ENCODE measurements at regions of chr1 and their contacts with region 1.

Region 1: DNA sequence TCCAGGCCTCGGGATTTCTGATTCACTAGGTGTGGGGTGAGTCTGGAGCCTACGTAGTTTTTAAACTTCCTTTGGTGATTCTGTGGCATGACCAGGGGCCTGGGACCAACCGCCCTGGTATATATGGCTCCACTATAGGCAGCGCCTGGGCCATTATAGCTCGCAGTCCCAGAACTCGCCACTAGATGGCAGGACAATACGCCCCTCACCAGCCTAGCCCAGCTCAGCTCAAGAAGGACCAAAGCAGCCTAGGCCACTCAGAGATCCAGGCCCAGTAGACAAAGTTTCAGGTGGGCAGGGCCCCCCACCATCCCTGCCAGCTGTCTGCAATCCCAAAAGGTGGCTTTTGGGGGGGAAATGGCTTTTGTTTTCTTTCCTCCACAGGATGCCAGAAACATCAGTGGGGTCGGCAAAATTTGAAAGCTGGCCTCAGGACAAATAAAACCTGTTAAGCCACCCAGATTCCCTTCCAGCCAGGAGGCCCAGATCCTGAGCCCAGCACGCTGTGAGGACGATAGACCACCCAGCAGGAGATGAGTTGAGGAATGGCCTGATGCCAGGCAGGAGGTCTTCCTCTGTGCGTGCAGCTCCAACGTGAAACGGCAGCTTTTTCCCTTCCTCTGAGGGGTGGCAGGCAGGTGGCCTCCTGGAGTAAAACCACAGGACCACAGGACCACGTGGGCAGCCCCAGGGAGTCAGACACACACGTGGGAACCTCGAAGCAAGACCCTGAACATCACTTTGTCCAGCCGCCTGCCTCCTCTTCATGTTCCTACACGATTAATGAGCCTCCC is 24.8 kb upstream of the TMEM51 start:
- DNase-seq: peak; percentile 60
- ATAC-seq: peak; percentile 99
- H3K4me3 ChIP-seq: no peak overlapping the region
- H3K27ac ChIP-seq: no peak overlapping the region
- H3K4me1 ChIP-seq: no peaks in the 10 kb centered on the region
- H3K27me3 ChIP-seq: no peaks in the 10 kb centered on the region
- CTCF ChIP-seq: peak; percentile 94

Region 2: DNA sequence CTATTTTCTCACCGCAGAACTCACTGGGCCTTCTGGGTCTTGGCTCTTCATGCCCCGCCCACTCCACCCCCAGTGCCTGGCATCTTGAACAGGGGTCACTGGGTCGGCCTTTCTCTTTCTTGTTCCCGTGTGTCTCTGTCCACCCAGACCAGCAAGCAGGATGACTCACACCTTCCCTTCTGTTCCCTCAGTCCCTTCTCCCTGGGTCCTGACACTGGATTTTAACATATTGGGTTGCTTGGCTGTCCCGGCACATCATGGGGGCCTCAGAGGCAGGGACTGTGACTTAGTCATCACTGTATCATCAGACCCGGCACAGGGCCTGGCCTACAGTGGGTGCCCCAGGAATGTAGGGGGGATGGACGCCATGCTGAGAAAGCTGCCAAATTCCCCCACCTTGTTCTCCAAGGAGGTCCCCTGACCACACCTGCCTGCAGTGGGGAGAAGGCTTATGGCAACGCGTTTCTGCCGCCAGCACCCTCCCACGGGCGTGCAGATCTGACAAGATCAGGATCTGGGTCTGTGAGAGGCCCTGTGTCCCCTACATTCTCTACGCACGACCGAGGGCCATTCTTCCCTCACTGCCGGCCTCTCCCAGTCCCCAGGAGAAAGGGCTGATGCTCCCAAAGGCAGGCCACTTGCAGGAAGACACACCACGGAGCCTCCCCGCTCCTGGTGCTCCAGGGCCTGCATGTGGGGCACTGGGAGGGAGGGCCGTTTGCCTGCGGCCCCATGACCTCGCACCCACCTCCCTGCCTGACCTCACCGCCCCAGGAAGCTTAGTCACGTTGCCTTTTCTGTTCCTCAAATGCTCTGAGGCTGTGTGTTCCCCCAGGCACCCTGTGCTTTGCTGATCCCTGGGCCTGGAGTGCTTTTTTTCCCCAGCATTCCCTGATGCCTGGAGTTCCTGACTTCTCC is 132.3 kb before region 1 on chr1:
- CTCF ChIA-PET with region 1: no interaction called
- POLR2A ChIA-PET with region 1: no interaction called
- in situ Hi-C with region 1: no loop called
- intact Hi-C with region 1: no loop called
- DNase-seq: no peak
- ATAC-seq: peak; percentile 50; the same call in 1 of the 2 replicates
- H3K4me3 ChIP-seq: no peak overlapping the region
- H3K27ac ChIP-seq: no peak overlapping the region
- H3K4me1 ChIP-seq: no peaks in the 10 kb centered on the region
- H3K27me3 ChIP-seq: no peaks in the 10 kb centered on the region
- CTCF ChIP-seq: no peak

Region 3: GRCh38 chr1:15062479-15063099 is 66.1 kb before region 1 on chr1:
- CTCF ChIA-PET with region 1: no interaction called
- POLR2A ChIA-PET with region 1: no interaction called
- in situ Hi-C with region 1: no loop called
- intact Hi-C with region 1: loop called (anchors 10 kb)
- DNase-seq: no peak
- ATAC-seq: no peak
- H3K4me3 ChIP-seq: no peak overlapping the region
- H3K27ac ChIP-seq: no peak overlapping the region
- H3K4me1 ChIP-seq: no peaks in the 10 kb centered on the region
- H3K27me3 ChIP-seq: no peaks in the 10 kb centered on the region
- CTCF ChIP-seq: peak; percentile 82

Region 4: DNA sequence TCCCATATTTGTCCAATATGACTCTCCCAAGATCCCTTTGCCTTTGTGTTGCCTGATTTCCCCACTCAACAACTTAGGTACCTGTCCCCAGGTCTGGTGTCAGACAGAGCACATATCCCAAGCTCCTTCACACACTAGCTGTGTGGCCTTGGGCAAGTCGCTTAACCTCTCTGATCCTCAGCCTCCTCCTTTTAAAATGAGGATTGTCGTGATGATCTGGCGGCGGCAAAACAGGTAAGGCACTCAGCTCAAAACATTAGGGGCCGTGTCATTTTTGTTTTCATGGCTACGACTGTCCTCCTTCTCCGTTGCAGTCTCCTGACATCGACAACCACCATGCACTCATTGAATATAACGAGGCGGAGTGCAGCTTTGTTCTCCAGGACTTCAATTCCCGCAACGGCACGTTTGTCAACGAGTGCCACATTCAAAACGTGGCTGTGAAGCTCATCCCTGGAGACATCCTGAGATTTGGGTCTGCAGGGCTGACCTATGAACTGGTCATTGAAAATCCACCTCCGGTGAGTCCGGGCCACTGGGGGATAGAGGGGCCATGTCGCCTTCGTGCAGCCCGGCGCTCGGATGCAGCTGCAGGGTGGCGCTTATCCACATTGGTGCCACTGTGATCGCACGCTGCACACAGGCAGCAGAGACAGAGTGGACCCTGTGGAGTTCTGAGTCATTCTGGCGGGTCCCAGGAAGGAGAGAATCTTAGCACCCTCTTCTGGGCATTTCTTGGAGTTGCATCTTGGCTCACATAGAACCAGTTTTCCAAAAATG is 143.5 kb after region 1 on chr1:
- CTCF ChIA-PET with region 1: interaction called, 14 read pairs
- POLR2A ChIA-PET with region 1: no interaction called
- in situ Hi-C with region 1: no loop called
- intact Hi-C with region 1: loop called (anchors 2 kb)
- DNase-seq: peak; percentile 69
- ATAC-seq: peak; percentile 97
- H3K4me3 ChIP-seq: peak overlapping the region; percentile 6 to 44; a peak in 3 of 4 replicates
- H3K27ac ChIP-seq: no peak overlapping the region
- H3K4me1 ChIP-seq: 0 out of 2 replicates have a peak, but pooled peaks cover 7% of the 10 kb centered on the region
- H3K27me3 ChIP-seq: no peaks in the 10 kb centered on the region
- CTCF ChIP-seq: peak; percentile 89

Region 5: DNA sequence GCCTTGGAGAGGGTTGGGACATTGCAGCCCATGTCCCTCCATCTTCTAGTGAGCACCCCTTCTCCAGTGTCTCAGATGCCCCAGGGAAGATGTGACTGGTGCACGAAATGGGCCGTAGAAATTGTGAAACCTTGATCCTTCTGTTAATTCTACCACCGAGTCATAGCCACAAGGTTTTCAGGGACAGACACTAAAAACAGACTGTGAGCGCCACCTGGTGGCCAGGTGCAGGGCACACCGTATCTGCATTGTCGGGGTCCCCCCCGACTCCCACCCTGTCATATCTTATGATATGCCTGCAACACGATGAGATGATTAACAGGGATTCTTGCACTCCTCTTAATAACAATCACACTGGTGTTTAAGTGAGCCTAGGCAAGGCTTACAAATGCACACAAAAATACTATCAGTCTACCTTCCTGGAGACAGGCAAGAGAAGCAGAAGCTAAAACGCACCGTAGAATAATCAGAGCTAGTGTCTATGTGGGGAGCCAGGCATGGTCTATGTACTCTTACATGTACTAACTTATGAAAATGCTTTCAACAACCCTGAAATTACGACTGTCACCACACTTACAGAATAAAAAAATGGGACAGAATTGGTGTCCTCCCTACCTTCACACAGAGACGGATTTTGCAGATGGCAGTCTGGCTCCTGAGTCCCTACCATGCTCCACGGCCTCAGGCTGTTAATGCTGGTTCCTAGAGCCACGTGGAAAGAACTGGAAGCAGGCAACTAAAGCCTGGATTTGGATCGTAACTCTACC is 176.2 kb after region 1 on chr1:
- CTCF ChIA-PET with region 1: interaction called, 10 read pairs
- POLR2A ChIA-PET with region 1: no interaction called
- in situ Hi-C with region 1: no loop called
- intact Hi-C with region 1: loop called (anchors 1 kb)
- DNase-seq: peak; percentile 36
- ATAC-seq: peak; percentile 80
- H3K4me3 ChIP-seq: no peak overlapping the region
- H3K27ac ChIP-seq: no peak overlapping the region
- H3K4me1 ChIP-seq: no peaks in the 10 kb centered on the region
- H3K27me3 ChIP-seq: no peaks in the 10 kb centered on the region
- CTCF ChIP-seq: peak; percentile 92

Measured in Panc1 (cell line).